Colonic mucosa (tissue), 4 donors: ENCODE measurements at regions of chr7 and their contacts with region 1.

Region 1: GRCh38 chr7:128904381-128905197 is 5.9 kb downstream of the KCP start:
- DNase-seq: no peak
- H3K4me3 ChIP-seq: no peak overlapping the region
- H3K27ac ChIP-seq: no peak overlapping the region
- H3K4me1 ChIP-seq: no peaks in the 10 kb centered on the region
- H3K27me3 ChIP-seq: peaks cover 3% of the 10 kb centered on the region
- CTCF ChIP-seq: peak; percentile 45

Region 2: GRCh38 chr7:129091484-129092002 is 187.0 kb after region 1 on chr7:
- intact Hi-C with region 1: loop called (anchors 5 kb)
- DNase-seq: peak; percentile 89
- H3K4me3 ChIP-seq: no peak overlapping the region
- H3K27ac ChIP-seq: no peak overlapping the region
- H3K4me1 ChIP-seq: no peaks in the 10 kb centered on the region
- H3K27me3 ChIP-seq: no peaks in the 10 kb centered on the region
- CTCF ChIP-seq: peak; percentile 98